ENCODE measurements at regions of chr17 and their contacts with region 1.

Region 1: GRCh38 chr17:16061631-16062030 is 62.0 kb downstream of the TTC19 start:
- DNase-seq: no peak
- ATAC-seq: no peak
- H3K4me3 ChIP-seq: no peak overlapping the region
- H3K27ac ChIP-seq: no peak overlapping the region
- H3K4me1 ChIP-seq: no peaks in the 10 kb centered on the region
- H3K27me3 ChIP-seq: no peaks in the 10 kb centered on the region
- CTCF ChIP-seq: no peak

Region 2: GRCh38 chr17:16027708-16028584 is 33.7 kb before region 1 on chr17:
- intact Hi-C with region 1: loop called in 1 of 10 experiments (anchors 5 kb)
- DNase-seq: no peak
- ATAC-seq: peak in 7 of 8 donors; percentile 56 to 96 (median 82)
- H3K4me3 ChIP-seq: no peak overlapping the region
- H3K27ac ChIP-seq: peak overlapping the region in 7 of 10 donors; percentile 13 to 61 (median 41)
- H3K4me1 ChIP-seq: peaks cover 0 to 23% (median 11%) of the 10 kb centered on the region in 9 donors
- H3K27me3 ChIP-seq: no peaks in the 10 kb centered on the region
- CTCF ChIP-seq: no peak

Measured in heart right ventricle (tissue), 16 donors.